CD4-positive, alpha-beta T cell (primary cell): ENCODE measurements at regions of chrX and their contacts with region 1.

Region 1: GRCh38 chrX:20639115-20639514 is 372.4 kb upstream of the RPS6KA3 start:
- DNase-seq: no peak
- ATAC-seq: no peak
- H3K4me3 ChIP-seq: no peak overlapping the region
- H3K4me3 Mint-ChIP-seq: no peak overlapping the region
- H3K27ac ChIP-seq: no peak overlapping the region
- H3K27ac Mint-ChIP-seq: no peak overlapping the region
- H3K4me1 ChIP-seq: no peaks in the 10 kb centered on the region
- H3K4me1 Mint-ChIP-seq: no peaks in the 10 kb centered on the region
- H3K27me3 ChIP-seq: no peaks in the 10 kb centered on the region
- H3K27me3 Mint-ChIP-seq: no peaks in the 10 kb centered on the region
- CTCF ChIP-seq: no peak

Region 2: DNA sequence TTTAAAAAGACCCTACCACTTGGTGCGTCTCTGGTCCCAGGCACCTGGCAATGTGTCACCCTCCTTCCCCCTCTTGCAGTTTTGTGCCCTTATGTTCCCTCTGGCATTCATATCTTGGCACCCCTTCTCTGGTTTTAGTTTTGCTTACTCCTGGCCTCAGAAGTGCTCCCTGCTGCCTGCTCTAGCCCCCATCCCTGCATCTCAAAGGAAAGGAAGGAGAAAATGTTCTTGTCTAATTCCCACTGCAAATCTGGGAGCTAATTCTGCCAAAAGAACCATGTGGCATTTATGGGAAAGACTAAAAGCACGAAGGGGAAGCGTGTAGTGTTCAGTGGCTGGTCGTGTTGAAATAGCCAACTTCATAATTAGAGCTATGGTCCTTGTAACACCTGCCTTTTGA is 32.3 kb before region 1 on chrX:
- CTCF ChIA-PET with region 1: no interaction called
- POLR2A ChIA-PET with region 1: no interaction called
- intact Hi-C with region 1: loop called in 1 of 2 experiments (anchors 2 kb)
- DNase-seq: no peak
- ATAC-seq: no peak
- H3K4me3 ChIP-seq: no peak overlapping the region
- H3K4me3 Mint-ChIP-seq: no peak overlapping the region
- H3K27ac ChIP-seq: no peak overlapping the region
- H3K27ac Mint-ChIP-seq: no peak overlapping the region
- H3K4me1 ChIP-seq: no peaks in the 10 kb centered on the region
- H3K4me1 Mint-ChIP-seq: no peaks in the 10 kb centered on the region
- H3K27me3 ChIP-seq: peaks cover 0 to 2% of the 10 kb centered on the region in 2 experiments
- H3K27me3 Mint-ChIP-seq: peaks cover 20% of the 10 kb centered on the region
- CTCF ChIP-seq: no peak

Region 3: GRCh38 chrX:20653070-20653469 is 14.0 kb after region 1 on chrX:
- CTCF ChIA-PET with region 1: no interaction called
- POLR2A ChIA-PET with region 1: no interaction called
- intact Hi-C with region 1: no loop called
- DNase-seq: no peak
- ATAC-seq: no peak
- H3K4me3 ChIP-seq: no peak overlapping the region
- H3K4me3 Mint-ChIP-seq: no peak overlapping the region
- H3K27ac ChIP-seq: no peak overlapping the region
- H3K27ac Mint-ChIP-seq: no peak overlapping the region
- H3K4me1 ChIP-seq: no peaks in the 10 kb centered on the region
- H3K4me1 Mint-ChIP-seq: no peaks in the 10 kb centered on the region
- H3K27me3 ChIP-seq: no peaks in the 10 kb centered on the region
- H3K27me3 Mint-ChIP-seq: no peaks in the 10 kb centered on the region
- CTCF ChIP-seq: no peak